Aorta (tissue), 5 donors: ENCODE measurements at regions of chr5 and their contacts with region 1.

Region 1: DNA sequence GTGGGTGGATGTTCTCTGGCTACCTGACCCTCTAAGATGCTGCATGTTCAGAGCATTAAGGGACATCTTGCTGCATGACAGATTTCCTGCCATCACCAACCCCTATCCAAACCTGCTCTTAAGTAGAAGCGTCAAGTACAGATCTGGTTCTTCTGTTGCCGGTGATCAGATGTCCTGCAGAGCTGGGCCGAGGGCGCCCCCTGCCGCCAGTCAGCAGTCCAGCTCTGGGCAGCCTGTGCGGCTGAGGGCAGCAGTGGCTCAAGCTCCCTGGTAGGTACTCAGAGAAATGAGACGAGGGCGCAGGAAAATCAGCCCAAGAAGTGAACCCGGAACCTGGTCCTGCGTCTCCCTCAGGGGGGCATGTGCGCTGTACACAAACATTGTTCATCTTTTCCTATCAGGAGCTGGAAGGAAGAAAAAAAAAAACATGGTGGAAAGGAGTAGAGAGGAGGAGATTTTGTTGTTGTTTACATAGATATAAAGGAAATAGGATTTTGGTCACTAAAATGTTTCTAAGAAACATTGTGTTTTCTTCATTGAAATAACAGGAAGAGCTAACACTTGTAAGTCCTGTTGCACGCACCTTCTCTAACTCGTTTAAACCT is 95.8 kb downstream of the CFAP90 start:
- DNase-seq: peak; percentile 67 to 82
- ATAC-seq: no peak
- H3K4me3 ChIP-seq: no peak overlapping the region
- H3K27ac ChIP-seq: no peak overlapping the region
- H3K4me1 ChIP-seq: peaks cover 0 to 4% of the 10 kb centered on the region in 2 donors
- H3K27me3 ChIP-seq: no peaks in the 10 kb centered on the region

Region 2: DNA sequence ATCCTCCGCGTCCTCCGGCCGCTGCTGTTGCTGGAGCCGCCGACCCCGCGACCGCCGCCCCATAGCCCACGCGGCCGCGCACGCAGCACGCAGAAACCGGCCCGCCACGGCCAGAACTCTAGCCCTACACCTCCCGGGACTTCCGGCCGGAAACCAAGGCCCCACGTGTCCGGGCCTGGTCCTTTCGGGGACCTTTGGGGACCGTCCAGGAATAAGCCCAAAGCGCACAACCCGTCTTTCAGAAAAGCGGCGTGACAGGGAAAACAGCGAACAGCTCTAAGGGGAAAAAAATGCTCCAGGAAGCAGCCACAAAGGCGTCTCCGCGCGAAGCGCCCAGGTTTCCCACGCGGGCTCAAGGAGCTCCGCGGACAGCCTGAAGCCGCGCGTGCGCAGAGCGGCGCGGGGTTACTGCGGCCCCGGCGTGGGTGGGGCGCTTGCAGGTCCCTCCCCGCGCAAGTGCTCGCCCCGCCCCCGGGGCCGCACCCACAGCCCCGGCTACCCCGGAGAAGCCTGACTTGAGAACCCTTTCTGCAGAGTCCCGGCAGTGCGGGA is 1122.1 kb before region 1 on chr5 and contains the starts of genes NSUN2 and SRD5A1:
- intact Hi-C with region 1: loop called in 1 of 2 experiments (anchors 10 kb)
- DNase-seq: peak; percentile 95 to 96
- ATAC-seq: peak; percentile 99
- H3K4me3 ChIP-seq: peak within 1 kb of the TSS; percentile 69 to 90
- H3K27ac ChIP-seq: peak within 1 kb of the TSS; percentile 69 to 91
- H3K4me1 ChIP-seq: no peaks in the 10 kb centered on the region
- H3K27me3 ChIP-seq: no peaks in the 10 kb centered on the region
- total RNA-seq, gene NSUN2: 38.6 to 45.0 TPM
- total RNA-seq, gene SRD5A1: 5.6 to 7.7 TPM

Region 3: DNA sequence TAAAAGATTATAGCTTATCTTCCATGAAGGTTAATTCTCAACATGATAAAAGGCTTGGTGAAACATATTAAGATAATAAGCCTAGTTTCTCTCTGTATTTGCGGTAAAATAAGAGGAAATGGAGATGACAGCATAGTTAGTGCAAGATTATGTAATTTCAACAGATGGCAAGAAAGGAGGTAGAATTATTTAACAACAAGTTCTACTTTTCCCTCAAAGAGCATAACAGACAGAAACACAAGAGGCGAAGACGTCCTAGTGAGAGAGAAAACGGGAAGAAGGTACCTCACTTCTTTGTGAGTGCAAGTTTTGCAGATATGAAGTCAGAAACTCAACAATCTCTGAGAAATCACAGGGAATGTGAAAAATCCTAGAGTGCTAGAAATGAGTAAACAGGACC is 504.0 kb before region 1 on chr5:
- intact Hi-C with region 1: loop called in 1 of 2 experiments (anchors 10 kb)
- DNase-seq: no peak
- ATAC-seq: no peak
- H3K4me3 ChIP-seq: no peak overlapping the region
- H3K27ac ChIP-seq: no peak overlapping the region
- H3K4me1 ChIP-seq: no peaks in the 10 kb centered on the region
- H3K27me3 ChIP-seq: peaks cover 0 to 1% of the 10 kb centered on the region in 2 donors

Region 4: GRCh38 chr5:7261049-7261448 is 494.0 kb before region 1 on chr5:
- intact Hi-C with region 1: loop called (anchors 2 to 10 kb)
- DNase-seq: no peak
- ATAC-seq: no peak
- H3K4me3 ChIP-seq: no peak overlapping the region
- H3K27ac ChIP-seq: no peak overlapping the region
- H3K4me1 ChIP-seq: no peaks in the 10 kb centered on the region
- H3K27me3 ChIP-seq: no peaks in the 10 kb centered on the region

Region 5: DNA sequence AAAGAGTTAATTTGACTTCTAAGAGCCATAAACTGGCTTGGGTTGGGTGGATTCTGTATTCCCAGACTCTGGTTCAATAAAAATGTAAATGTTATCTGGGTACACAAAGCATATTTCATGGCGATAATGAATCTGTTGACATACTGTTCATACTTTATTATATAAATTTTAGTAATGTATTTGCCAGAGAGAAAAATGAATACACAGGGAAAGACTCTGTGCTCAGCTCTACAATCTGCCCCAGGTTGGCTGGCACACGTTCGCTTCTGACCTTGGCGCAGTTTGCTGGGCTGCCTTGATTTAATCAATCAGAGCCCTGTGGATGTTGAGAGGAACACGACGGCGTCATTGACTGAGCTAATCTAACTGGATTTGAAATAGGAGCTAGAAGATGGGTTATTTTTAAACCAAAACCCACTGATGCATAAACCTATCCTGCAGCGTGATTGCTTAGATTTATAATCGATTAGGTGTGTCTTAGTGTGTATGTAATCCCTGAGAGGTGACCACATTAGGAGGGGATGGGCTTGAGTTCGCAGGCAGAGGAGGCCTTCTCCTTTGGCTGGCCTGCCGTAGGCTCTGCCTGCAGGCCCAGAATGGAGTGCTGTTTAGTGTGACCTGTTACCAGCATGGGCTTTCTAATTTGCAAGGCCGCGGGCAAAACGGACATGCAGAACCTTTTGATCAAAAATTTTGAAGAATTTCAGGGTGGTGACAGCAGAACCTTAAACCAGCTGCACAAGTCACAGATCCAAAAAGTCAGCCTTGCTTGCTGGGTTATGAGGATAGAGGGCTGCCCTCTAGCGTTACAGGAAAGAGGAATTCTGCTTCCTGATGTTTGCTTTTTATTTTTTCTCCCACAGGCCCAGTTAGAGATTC is 363.0 kb before region 1 on chr5:
- intact Hi-C with region 1: loop called in 1 of 2 experiments (anchors 5 kb)
- DNase-seq: no peak
- ATAC-seq: no peak
- H3K4me3 ChIP-seq: no peak overlapping the region
- H3K27ac ChIP-seq: no peak overlapping the region
- H3K4me1 ChIP-seq: no peaks in the 10 kb centered on the region
- H3K27me3 ChIP-seq: no peaks in the 10 kb centered on the region

Region 6: DNA sequence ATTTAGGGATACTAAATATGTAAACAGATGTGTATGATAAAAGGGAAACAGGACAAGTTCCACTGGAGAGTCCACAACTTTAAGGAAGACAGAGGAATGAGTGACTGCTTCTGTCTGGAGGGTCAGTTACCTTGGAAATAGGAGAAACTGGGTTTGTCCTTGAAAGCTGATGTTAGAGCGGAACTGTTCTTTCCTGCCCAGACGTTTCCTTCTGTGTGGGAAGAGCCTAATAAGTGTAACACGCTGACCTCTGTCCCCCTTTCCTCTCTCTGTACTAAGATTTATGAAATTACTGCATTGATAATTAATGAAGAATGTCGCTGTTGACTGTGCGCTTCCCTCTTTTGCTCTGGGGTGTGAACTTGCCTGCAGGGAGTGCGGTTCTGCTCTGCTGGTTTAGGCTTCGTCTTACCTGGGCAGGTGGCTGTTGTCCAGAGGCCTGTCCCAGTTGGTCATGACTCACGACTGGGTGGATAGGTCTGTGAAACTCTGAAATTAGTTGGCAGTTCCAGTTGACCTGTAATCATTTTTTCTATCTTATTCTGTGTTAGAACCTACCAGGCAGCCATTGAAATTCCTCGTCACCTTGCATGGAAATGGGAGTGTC is 240.7 kb after region 1 on chr5:
- intact Hi-C with region 1: no loop called
- DNase-seq: no peak
- ATAC-seq: no peak
- H3K4me3 ChIP-seq: no peak overlapping the region
- H3K27ac ChIP-seq: no peak overlapping the region
- H3K4me1 ChIP-seq: no peaks in the 10 kb centered on the region
- H3K27me3 ChIP-seq: no peaks in the 10 kb centered on the region